ENCODE measurements at regions of chr7 and their contacts with region 1.

Region 1: GRCh38 chr7:54129035-54129434 is 413.1 kb upstream of the VSTM2A start:
- DNase-seq: no peak

Region 2: GRCh38 chr7:54299426-54299825 is 170.4 kb after region 1 on chr7:
- intact Hi-C with region 1: loop called in 1 of 2 experiments (anchors 5 kb)
- DNase-seq: no peak